GM12878 (cell line): ENCODE measurements at regions of chr9 and their contacts with region 1.

Region 1: GRCh38 chr9:32378993-32379729 is 5.3 kb upstream of the ACO1 start:
- DNase-seq: peak; percentile 44
- ATAC-seq: peak; percentile 92
- H3K4me3 ChIP-seq: no peak overlapping the region
- H3K27ac ChIP-seq: no peak overlapping the region
- H3K4me1 ChIP-seq: no peaks in the 10 kb centered on the region
- H3K27me3 ChIP-seq: no peaks in the 10 kb centered on the region; a peak in 2 of 4 replicates
- CTCF ChIP-seq: peak; percentile 76 to 91 (median 85)
- EP300 ChIP-seq: no peak
- POLR2A ChIP-seq: no peak
- RAD21 ChIP-seq: peak; percentile 99

Region 2: DNA sequence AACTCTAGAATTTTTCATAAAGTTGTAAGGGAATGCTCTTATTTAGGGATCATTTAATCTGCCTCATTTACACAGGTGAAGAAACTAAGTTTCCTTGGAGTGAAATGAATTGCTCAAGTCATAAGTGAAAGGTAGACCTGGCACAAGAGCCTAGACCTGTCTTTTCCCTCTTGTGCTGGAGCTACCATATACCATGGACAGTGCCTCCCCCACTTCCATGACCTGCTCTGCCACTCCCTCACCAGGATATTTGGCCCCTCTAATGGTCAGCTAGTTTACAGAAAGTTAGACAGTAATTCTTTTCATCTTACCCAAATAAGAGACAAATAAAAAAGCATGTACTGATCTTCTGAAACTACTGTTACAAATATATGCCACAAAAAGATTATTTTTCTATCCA is 100.2 kb before region 1 on chr9:
- CTCF ChIA-PET with region 1: no interaction called
- POLR2A ChIA-PET with region 1: no interaction called
- RAD21 ChIA-PET with region 1: no interaction called
- SMC1A ChIA-PET with region 1: no interaction called
- in situ Hi-C with region 1: no loop called
- intact Hi-C with region 1: no loop called
- DNase-seq: no peak
- ATAC-seq: no peak
- H3K4me3 ChIP-seq: no peak overlapping the region
- H3K27ac ChIP-seq: no peak overlapping the region
- H3K4me1 ChIP-seq: no peaks in the 10 kb centered on the region
- H3K27me3 ChIP-seq: no peaks in the 10 kb centered on the region
- CTCF ChIP-seq: no peak
- EP300 ChIP-seq: no peak
- POLR2A ChIP-seq: no peak
- RAD21 ChIP-seq: no peak

Region 3: GRCh38 chr9:32398207-32398606 is 19.0 kb after region 1 on chr9:
- CTCF ChIA-PET with region 1: interaction called, 12 read pairs
- POLR2A ChIA-PET with region 1: no interaction called
- RAD21 ChIA-PET with region 1: interaction called, 5 read pairs
- SMC1A ChIA-PET with region 1: interaction called, 13 read pairs
- in situ Hi-C with region 1: no loop called
- intact Hi-C with region 1: no loop called
- DNase-seq: no peak
- ATAC-seq: no peak
- H3K4me3 ChIP-seq: no peak overlapping the region
- H3K27ac ChIP-seq: no peak overlapping the region
- H3K4me1 ChIP-seq: peaks cover 3% of the 10 kb centered on the region; the same call in 1 of the 2 replicates
- H3K27me3 ChIP-seq: no peaks in the 10 kb centered on the region
- CTCF ChIP-seq: no peak
- EP300 ChIP-seq: no peak
- POLR2A ChIP-seq: no peak
- RAD21 ChIP-seq: no peak

Region 4: DNA sequence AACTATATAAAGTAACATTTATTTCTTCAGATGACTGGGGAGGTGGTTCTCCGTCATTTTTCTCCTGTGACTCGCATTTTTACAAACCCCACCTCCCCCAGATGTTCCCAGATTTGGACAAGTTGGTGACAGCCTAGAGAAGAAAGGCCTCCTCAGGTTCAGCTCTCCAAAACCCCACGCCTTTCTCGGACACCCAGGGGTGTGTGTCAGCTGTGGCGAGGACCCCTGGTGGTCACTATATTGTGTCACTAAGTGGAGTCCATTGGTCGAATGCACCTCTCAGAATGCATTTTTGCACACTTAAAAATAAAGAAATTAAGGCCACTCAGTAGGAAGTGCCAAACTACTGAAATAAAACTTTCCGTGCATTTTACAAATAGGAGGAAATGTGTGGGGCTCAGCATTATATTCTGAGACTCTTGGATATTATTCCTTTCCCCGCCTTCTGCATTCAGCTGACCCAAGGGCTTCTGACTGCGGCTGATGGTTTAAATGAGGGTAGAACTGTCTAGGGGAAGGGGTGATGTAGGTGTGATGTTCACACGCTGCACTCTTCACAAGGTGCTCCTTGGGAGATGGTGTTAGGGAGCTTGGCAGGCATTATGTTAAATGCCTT is 52.9 kb after region 1 on chr9:
- CTCF ChIA-PET with region 1: interaction called, 50 read pairs
- POLR2A ChIA-PET with region 1: no interaction called
- RAD21 ChIA-PET with region 1: interaction called, 11 read pairs
- SMC1A ChIA-PET with region 1: interaction called, 24 read pairs
- in situ Hi-C with region 1: no loop called
- intact Hi-C with region 1: loop called (anchors 1 kb)
- DNase-seq: no peak
- ATAC-seq: peak; percentile 72
- H3K4me3 ChIP-seq: no peak overlapping the region
- H3K27ac ChIP-seq: no peak overlapping the region
- H3K4me1 ChIP-seq: no peaks in the 10 kb centered on the region
- H3K27me3 ChIP-seq: no peaks in the 10 kb centered on the region
- CTCF ChIP-seq: peak; percentile 33 to 46 (median 39); a peak in 5 of 6 replicates
- EP300 ChIP-seq: no peak
- POLR2A ChIP-seq: no peak
- RAD21 ChIP-seq: peak; percentile 29; the same call in 1 of the 2 replicates

Region 5: DNA sequence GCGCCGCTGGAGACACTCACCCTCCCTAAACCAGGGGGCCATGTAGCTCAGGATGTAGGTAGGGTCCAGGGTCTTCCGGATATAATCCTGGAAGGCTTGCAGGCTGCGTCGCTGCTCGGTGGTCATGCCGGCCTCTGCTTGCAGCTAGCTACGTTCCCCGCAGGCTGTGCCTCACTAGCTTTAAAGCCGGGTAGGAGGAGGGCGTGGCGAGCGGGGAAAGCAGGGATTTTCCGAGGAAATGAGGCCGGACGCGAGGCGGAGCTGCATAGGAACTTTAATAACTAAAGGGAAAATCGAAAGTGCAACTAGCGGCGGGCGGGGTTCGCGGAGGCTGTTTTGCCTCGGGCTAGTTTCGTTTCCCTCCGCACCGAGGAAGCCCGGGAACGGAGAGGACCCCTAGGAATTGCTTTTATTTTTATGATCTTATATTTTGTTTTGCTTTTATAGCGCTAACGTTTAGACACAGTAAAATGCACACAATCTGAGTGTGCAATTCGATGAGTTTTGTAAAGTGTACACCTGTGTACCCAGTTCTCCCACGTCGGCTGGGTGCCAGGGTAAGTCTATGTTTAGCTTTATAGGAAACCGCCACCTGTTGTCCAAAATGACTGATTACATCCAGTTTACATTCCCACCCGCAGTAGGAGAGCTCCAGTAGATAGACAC is 147.0 kb after region 1 on chr9 and contains the start of gene RIGI:
- CTCF ChIA-PET with region 1: interaction called, 58 read pairs
- POLR2A ChIA-PET with region 1: interaction called, 9 read pairs
- RAD21 ChIA-PET with region 1: interaction called, 36 read pairs
- SMC1A ChIA-PET with region 1: interaction called, 40 read pairs
- in situ Hi-C with region 1: no loop called
- intact Hi-C with region 1: loop called (anchors 1 kb)
- DNase-seq: peak; percentile 51
- ATAC-seq: peak; percentile 76
- H3K4me3 ChIP-seq: peak within 1 kb of the TSS; percentile 98
- H3K27ac ChIP-seq: peak within 1 kb of the TSS; percentile 84
- H3K4me1 ChIP-seq: no peaks in the 10 kb centered on the region; the same call in 1 of the 2 replicates
- H3K27me3 ChIP-seq: no peaks in the 10 kb centered on the region
- CTCF ChIP-seq: peak; percentile 24 to 39 (median 34); a peak in 5 of 6 replicates
- EP300 ChIP-seq: no peak
- POLR2A ChIP-seq: peak; percentile 62
- RAD21 ChIP-seq: peak; percentile 21; the same call in 1 of the 2 replicates
- polyA plus RNA-seq, gene RIGI: 6.3 to 7.2 TPM

Region 6: GRCh38 chr9:32566770-32567169 is 187.6 kb after region 1 on chr9:
- CTCF ChIA-PET with region 1: interaction called, 182 read pairs
- POLR2A ChIA-PET with region 1: interaction called, 12 read pairs
- RAD21 ChIA-PET with region 1: interaction called, 368 read pairs
- SMC1A ChIA-PET with region 1: interaction called, 100 read pairs
- in situ Hi-C with region 1: no loop called
- intact Hi-C with region 1: no loop called
- DNase-seq: no peak
- ATAC-seq: no peak
- H3K4me3 ChIP-seq: no peak overlapping the region
- H3K27ac ChIP-seq: no peak overlapping the region
- H3K4me1 ChIP-seq: no peaks in the 10 kb centered on the region; the same call in 1 of the 2 replicates
- H3K27me3 ChIP-seq: no peaks in the 10 kb centered on the region
- CTCF ChIP-seq: no peak
- EP300 ChIP-seq: no peak
- POLR2A ChIP-seq: no peak
- RAD21 ChIP-seq: no peak

Region 7: GRCh38 chr9:32579706-32580331 is 200.7 kb after region 1 on chr9:
- CTCF ChIA-PET with region 1: interaction called, 597 read pairs
- POLR2A ChIA-PET with region 1: interaction called, 7 read pairs
- RAD21 ChIA-PET with region 1: interaction called, 368 read pairs
- SMC1A ChIA-PET with region 1: interaction called, 285 read pairs
- in situ Hi-C with region 1: loop called (anchors 5 kb)
- intact Hi-C with region 1: loop called (anchors 1 kb)
- DNase-seq: no peak
- ATAC-seq: peak; percentile 73
- H3K4me3 ChIP-seq: no peak overlapping the region
- H3K27ac ChIP-seq: no peak overlapping the region
- H3K4me1 ChIP-seq: peaks cover 4% of the 10 kb centered on the region; the same call in 1 of the 2 replicates
- H3K27me3 ChIP-seq: no peaks in the 10 kb centered on the region
- CTCF ChIP-seq: peak; percentile 85 to 93 (median 91)
- EP300 ChIP-seq: no peak
- POLR2A ChIP-seq: no peak
- RAD21 ChIP-seq: peak; percentile 83

Region 8: GRCh38 chr9:32968101-32969011 is 589.2 kb after region 1 on chr9:
- CTCF ChIA-PET with region 1: interaction called, 62 read pairs
- POLR2A ChIA-PET with region 1: no interaction called
- RAD21 ChIA-PET with region 1: interaction called, 22 read pairs
- SMC1A ChIA-PET with region 1: interaction called, 22 read pairs
- in situ Hi-C with region 1: no loop called
- intact Hi-C with region 1: loop called (anchors 1 kb)
- DNase-seq: no peak
- ATAC-seq: peak; percentile 61
- H3K4me3 ChIP-seq: no peak overlapping the region
- H3K27ac ChIP-seq: no peak overlapping the region
- H3K4me1 ChIP-seq: no peaks in the 10 kb centered on the region
- H3K27me3 ChIP-seq: no peaks in the 10 kb centered on the region
- CTCF ChIP-seq: peak; percentile 61 to 73 (median 72)
- EP300 ChIP-seq: no peak
- POLR2A ChIP-seq: no peak
- RAD21 ChIP-seq: peak; percentile 75